Activated CD4-positive, alpha-beta T cell treated with anti-CD3 and anti-CD28 coated beads for 36 hours (primary cell): ENCODE measurements at regions of chr1 and their contacts with region 1.

Region 1: DNA sequence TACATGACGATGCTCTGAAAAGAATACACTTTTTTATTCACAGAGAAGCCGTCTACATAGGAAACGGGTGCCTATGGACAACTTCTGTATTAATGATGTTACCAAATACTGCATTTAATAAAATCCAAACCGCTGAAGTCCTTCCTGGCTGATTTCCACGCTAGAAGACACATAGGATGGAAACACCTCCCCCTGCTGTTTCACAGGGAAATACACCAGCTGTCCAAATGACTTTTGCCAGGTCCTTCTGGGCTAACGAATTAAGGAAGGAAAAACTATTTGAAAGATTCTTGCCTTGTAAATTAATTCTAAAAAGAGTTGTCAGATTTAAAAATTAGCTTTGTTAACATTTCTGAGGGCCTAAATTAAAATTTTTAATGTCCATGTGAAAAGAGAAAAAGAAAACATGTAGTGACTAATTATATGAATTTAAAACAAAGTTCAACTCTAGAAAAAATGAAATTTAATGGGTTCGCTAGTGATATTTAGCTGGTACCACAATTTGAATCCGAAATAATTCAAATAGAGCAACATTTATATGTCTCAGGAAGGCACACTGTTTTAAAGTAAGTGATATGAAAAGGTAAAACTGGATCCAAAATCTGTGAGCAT is 146.0 kb downstream of the RERE start:
- DNase-seq: peak; percentile 26
- ATAC-seq: no peak
- H3K4me3 Mint-ChIP-seq: no peak overlapping the region
- H3K27ac Mint-ChIP-seq: no peak overlapping the region
- H3K4me1 Mint-ChIP-seq: peaks cover 62% of the 10 kb centered on the region
- H3K27me3 Mint-ChIP-seq: no peaks in the 10 kb centered on the region

Region 2: DNA sequence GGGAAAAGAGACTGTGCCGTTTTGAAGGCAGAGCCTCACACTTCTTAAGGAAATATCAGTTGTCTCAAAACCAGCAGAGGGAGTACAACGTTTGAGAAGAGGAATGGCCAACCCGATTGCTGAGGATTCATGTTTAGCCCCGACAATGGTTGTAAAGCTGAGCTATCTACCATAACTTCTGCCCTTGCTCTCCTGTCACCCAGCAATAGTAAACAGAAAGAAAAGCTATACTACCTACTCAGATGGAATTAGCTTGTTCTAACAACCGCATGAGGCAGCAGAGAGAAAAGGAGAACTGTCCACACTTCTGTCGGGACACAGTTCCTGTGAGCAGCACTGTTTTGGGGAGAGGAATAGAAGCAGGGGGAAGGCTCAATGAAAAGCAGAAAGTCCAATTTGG is 262.3 kb before region 1 on chr1:
- CTCF ChIA-PET with region 1: interaction called, 3 read pairs
- POLR2A ChIA-PET with region 1: no interaction called
- intact Hi-C with region 1: loop called in 1 of 2 experiments (anchors 5 kb)
- DNase-seq: peak; percentile 23
- ATAC-seq: peak; percentile 69
- H3K4me3 Mint-ChIP-seq: peak overlapping the region; percentile 33
- H3K27ac Mint-ChIP-seq: peak overlapping the region; percentile 77
- H3K4me1 Mint-ChIP-seq: peaks cover 61% of the 10 kb centered on the region
- H3K27me3 Mint-ChIP-seq: no peaks in the 10 kb centered on the region

Region 3: GRCh38 chr1:8560611-8561544 is 110.5 kb before region 1 on chr1:
- CTCF ChIA-PET with region 1: interaction called, 33 read pairs
- POLR2A ChIA-PET with region 1: no interaction called
- intact Hi-C with region 1: loop called (anchors 1 kb)
- DNase-seq: peak; percentile 34
- ATAC-seq: peak; percentile 80
- H3K4me3 Mint-ChIP-seq: no peak overlapping the region
- H3K27ac Mint-ChIP-seq: peak overlapping the region; percentile 56
- H3K4me1 Mint-ChIP-seq: peaks cover 49% of the 10 kb centered on the region
- H3K27me3 Mint-ChIP-seq: no peaks in the 10 kb centered on the region

Region 4: DNA sequence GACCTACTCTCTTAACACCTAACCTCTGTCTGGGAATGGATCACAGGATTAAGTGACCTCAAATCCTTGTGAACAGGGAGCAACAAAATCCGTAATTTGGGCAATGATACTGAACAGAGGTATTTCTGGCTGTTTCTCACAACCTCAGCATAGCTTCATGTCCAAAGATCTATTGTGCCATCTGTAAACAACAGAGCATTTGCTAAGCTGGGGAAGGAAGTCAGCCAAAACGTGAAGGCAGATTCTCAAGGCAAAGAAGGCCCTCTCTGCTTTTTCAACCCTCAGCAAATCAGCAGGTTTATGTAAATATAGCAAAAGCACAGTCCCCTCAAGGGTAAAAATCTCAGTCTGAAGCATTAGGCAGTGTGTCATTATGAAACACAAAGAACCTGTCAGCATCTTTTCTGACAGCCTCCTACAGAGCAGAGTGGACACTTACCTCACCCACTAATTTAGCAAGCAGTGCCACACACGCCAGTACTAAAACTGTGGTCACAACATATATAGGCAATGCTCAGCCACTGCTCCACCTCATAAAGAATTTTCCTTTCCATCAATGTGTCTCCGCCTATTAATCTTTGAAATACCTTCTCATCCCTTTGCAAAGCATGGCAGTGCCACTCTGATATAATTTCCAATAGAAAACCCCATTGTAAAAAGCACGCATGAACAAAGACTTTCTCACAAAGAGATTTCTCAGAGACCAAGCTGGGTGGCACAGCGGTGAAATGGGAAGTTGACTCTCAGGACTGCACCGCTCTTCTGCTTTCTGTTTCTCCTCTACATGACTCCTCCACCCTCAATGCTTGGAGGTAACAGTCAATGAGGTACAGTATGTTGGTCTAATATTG is 41.9 kb before region 1 on chr1:
- CTCF ChIA-PET with region 1: interaction called, 11 read pairs
- POLR2A ChIA-PET with region 1: no interaction called
- intact Hi-C with region 1: no loop called
- DNase-seq: peak; percentile 29
- ATAC-seq: peak; percentile 91
- H3K4me3 Mint-ChIP-seq: no peak overlapping the region
- H3K27ac Mint-ChIP-seq: peak overlapping the region; percentile 38
- H3K4me1 Mint-ChIP-seq: peaks cover 50% of the 10 kb centered on the region
- H3K27me3 Mint-ChIP-seq: no peaks in the 10 kb centered on the region

Region 5: DNA sequence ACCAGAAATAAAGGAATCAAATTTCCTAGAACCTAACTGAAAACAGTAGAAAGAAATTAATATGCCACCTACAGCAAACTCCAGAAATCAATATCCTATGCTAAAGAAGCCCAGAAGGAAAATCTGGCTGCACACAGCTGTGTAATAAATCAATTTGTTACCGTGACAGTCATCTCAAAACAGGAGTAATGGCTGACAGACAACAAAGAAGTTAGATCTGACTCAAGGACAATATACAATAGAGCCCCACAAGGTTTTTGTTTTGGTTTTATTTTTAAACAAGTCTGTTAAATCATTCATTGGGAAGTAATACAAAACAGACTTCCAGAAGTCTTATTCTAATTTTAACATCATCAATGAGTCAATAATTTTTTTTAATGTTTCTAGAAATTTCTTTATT is 22.4 kb before region 1 on chr1:
- CTCF ChIA-PET with region 1: interaction called, 5 read pairs
- POLR2A ChIA-PET with region 1: no interaction called
- intact Hi-C with region 1: loop called in 1 of 2 experiments (anchors 2 kb)
- DNase-seq: peak; percentile 22
- ATAC-seq: peak; percentile 85
- H3K4me3 Mint-ChIP-seq: no peak overlapping the region
- H3K27ac Mint-ChIP-seq: peak overlapping the region; percentile 37
- H3K4me1 Mint-ChIP-seq: peaks cover 50% of the 10 kb centered on the region
- H3K27me3 Mint-ChIP-seq: no peaks in the 10 kb centered on the region

Region 6: DNA sequence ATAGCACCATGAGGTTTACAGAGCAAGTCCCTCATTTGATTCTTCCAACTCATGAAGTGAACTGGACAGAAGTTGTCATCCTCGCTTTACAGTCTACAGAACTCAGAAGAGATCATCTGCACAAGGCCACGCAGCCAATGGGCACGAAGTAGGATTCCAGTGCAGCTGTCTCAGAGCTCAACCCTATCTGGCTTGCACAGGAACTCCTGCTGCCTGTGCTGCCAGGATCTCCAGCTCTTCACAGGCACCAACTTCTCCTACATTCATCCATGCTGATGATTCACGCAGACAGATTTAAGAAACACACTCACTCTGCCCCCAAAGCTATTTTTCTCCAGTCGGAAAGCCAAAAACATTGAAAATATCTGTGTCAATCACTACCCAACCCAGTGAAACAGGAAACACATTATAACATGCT is 11.0 kb before region 1 on chr1:
- CTCF ChIA-PET with region 1: interaction called, 10 read pairs
- POLR2A ChIA-PET with region 1: interaction called, 7 read pairs
- intact Hi-C with region 1: no loop called
- DNase-seq: peak; percentile 24
- ATAC-seq: no peak
- H3K4me3 Mint-ChIP-seq: no peak overlapping the region
- H3K27ac Mint-ChIP-seq: no peak overlapping the region
- H3K4me1 Mint-ChIP-seq: peaks cover 4% of the 10 kb centered on the region
- H3K27me3 Mint-ChIP-seq: no peaks in the 10 kb centered on the region